ENCODE measurements at regions of chr7 and their contacts with region 1.

Region 1: DNA sequence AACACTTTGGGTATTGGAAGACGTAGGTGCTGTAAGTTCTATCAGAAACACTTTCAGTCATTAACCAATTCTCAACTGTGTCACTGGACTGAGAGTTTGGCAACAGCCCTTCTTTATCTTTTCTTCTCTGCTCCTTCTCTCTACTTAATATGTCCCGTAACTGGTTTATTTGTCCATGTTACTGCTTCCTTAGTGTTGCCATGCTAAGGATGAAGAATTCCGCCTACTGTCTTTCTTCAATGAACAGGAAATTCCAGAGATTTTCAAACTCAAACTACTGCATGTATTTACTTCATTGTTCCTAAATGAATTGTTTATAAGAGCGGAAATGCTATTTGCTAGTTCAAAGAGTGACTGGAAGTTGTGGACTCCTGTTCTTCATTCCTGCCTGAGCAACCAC is 143.7 kb downstream of the TAX1BP1 start:
- DNase-seq: peak; percentile 81
- H3K4me3 ChIP-seq: peak overlapping the region in 1 of 3 experiments; percentile 0
- H3K27ac ChIP-seq: peak overlapping the region; percentile 85
- H3K4me1 ChIP-seq: peaks cover 31% of the 10 kb centered on the region
- H3K27me3 ChIP-seq: no peaks in the 10 kb centered on the region
- CTCF ChIP-seq: no peak
- POLR2A ChIP-seq: peak; percentile 40

Region 2: DNA sequence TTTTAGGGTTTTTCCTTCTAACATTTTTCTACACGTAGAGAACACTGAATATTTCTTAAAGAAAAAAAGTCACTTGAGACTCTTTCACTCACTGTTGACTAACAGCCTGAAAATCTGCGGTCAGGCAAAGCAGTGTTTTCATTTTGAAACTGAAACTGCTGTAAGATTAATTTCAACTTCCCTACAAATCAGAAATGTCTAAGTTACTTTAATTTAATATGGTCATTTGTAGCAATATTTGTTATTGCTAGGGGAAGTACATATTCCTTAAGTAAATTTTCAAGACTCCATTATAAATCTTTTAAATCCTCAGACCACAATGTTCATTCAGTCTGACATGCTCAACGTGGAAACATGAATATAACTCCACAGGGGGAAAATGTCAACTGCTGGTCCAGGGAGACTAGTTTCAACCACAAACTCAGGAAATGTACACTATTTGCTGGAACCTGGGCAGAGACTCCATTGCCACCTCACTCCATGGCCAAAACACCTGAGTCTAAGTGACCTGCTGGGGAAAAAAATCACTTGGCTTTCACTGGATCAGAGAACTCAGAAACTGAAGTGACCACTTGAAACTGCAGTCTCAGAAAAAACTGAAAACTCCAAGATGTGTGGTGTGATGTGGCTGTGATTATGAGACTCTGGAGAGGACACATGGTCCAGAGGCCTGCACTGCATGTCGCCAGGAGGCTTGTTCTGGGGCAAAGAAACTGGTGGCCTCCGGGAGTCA is 17.5 kb after region 1 on chr7:
- CTCF ChIA-PET with region 1: interaction called, 5 read pairs
- POLR2A ChIA-PET with region 1: no interaction called
- dilution Hi-C with region 1: no loop called
- intact Hi-C with region 1: loop called (anchors 2 kb)
- DNase-seq: peak; percentile 61
- H3K4me3 ChIP-seq: peak overlapping the region in 1 of 3 experiments; percentile 69
- H3K27ac ChIP-seq: peak overlapping the region; percentile 33
- H3K4me1 ChIP-seq: peaks cover 10% of the 10 kb centered on the region
- H3K27me3 ChIP-seq: no peaks in the 10 kb centered on the region
- CTCF ChIP-seq: no peak
- POLR2A ChIP-seq: no peak